Mammary epithelial cell (primary cell): ENCODE measurements at regions of chr6 and their contacts with region 1.

Region 1: GRCh38 chr6:54291146-54291545 is 17.1 kb upstream of the TINAG start:
- DNase-seq: peak; percentile 96
- H3K4me3 ChIP-seq: peak overlapping the region in 1 of 3 experiments; percentile 29
- H3K27ac ChIP-seq: peak overlapping the region; percentile 93
- H3K4me1 ChIP-seq: peaks cover 40% of the 10 kb centered on the region
- H3K27me3 ChIP-seq: no peaks in the 10 kb centered on the region
- CTCF ChIP-seq: no peak

Region 2: DNA sequence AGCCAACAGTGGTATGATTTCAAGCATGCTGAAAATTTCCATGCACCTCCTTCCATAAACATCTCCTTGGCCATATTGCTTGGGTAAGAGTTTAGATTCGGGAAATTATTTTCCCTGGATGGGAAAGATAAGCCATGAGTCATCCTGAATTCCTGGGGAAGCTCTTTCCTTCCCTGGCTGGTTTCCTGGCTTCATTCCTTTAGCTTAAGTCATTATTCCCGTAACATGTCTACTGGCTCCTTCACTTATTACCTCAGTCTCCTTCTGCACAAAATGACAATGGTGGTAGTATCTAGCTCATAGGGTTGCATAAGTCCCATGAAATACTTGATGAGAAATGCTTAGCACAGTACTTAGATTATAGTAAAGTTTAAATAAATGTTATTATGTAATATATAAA is 44.7 kb after region 1 on chr6:
- CTCF ChIA-PET with region 1: no interaction called
- dilution Hi-C with region 1: no loop called
- in situ Hi-C with region 1: no loop called
- intact Hi-C with region 1: loop called (anchors 5 kb)
- DNase-seq: peak; percentile 87
- H3K4me3 ChIP-seq: no peak overlapping the region
- H3K27ac ChIP-seq: no peak overlapping the region
- H3K4me1 ChIP-seq: peaks cover 11% of the 10 kb centered on the region
- H3K27me3 ChIP-seq: no peaks in the 10 kb centered on the region
- CTCF ChIP-seq: no peak

Region 3: GRCh38 chr6:54689620-54690019 is 398.5 kb after region 1 on chr6:
- CTCF ChIA-PET with region 1: no interaction called
- dilution Hi-C with region 1: no loop called
- in situ Hi-C with region 1: no loop called
- intact Hi-C with region 1: no loop called
- DNase-seq: no peak
- H3K4me3 ChIP-seq: no peak overlapping the region
- H3K27ac ChIP-seq: no peak overlapping the region
- H3K4me1 ChIP-seq: no peaks in the 10 kb centered on the region
- H3K27me3 ChIP-seq: no peaks in the 10 kb centered on the region
- CTCF ChIP-seq: no peak